Brain microvascular endothelial cell (primary cell): ENCODE measurements at regions of chr5 and their contacts with region 1.

Region 1: DNA sequence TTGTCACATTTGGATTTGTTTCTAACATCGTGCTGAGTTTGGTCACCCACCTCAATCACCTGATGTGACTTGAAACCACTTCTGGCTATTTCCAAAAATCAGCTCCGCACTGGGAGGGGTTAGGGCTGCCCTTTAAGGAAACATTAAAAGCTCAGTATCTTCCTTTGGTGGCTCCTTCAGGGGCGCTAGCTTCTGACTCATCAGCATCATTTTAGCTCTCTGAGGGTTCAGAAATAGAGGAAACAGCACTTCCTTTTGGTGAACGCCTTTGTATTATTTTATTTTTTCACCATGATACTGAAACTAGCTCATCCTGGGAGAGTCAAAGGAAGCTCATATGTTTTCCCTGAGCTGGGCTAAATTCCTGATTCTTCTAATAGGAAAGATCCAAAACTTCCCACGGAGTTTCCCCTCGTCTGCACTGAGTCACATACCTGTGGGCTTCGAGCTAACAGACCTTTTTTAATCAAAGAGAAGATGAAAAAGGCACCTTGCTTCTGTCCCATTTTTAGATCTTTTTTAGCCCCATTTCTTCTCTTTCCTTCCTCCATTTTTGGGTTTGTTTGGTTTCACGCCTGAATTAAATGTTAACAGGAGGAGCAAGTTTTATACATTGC is 48.2 kb downstream of the ROPN1L start:
- DNase-seq: no peak
- H3K4me3 ChIP-seq: no peak overlapping the region
- H3K27ac ChIP-seq: no peak overlapping the region
- H3K27me3 ChIP-seq: no peaks in the 10 kb centered on the region
- CTCF ChIP-seq: no peak

Region 2: GRCh38 chr5:10635257-10635866 is 145.4 kb after region 1 on chr5:
- in situ Hi-C with region 1: loop called (anchors 25 kb)
- DNase-seq: peak; percentile 67
- H3K4me3 ChIP-seq: no peak overlapping the region
- H3K27ac ChIP-seq: no peak overlapping the region
- H3K27me3 ChIP-seq: no peaks in the 10 kb centered on the region
- CTCF ChIP-seq: no peak

Region 3: GRCh38 chr5:10724799-10725507 is 235.0 kb after region 1 on chr5:
- in situ Hi-C with region 1: no loop called
- DNase-seq: peak; percentile 77
- H3K4me3 ChIP-seq: peak overlapping the region; percentile 29
- H3K27ac ChIP-seq: peak overlapping the region; percentile 72
- H3K27me3 ChIP-seq: no peaks in the 10 kb centered on the region
- CTCF ChIP-seq: peak; percentile 80